ENCODE measurements at regions of chr3 and their contacts with region 1.

Region 1: GRCh38 chr3:49769926-49770325 is 16.4 kb downstream of the IP6K1 start:
- DNase-seq: no peak
- CTCF ChIP-seq: no peak

Region 2: GRCh38 chr3:49509028-49509561 is 260.8 kb before region 1 on chr3:
- CTCF ChIA-PET with region 1: no interaction called
- POLR2A ChIA-PET with region 1: no interaction called
- DNase-seq: no peak
- CTCF ChIP-seq: no peak

Region 3: GRCh38 chr3:50278868-50279224 is 508.9 kb after region 1 on chr3 and contains the start of gene LSMEM2:
- CTCF ChIA-PET with region 1: no interaction called
- POLR2A ChIA-PET with region 1: interaction called, 13 read pairs
- DNase-seq: no peak
- CTCF ChIP-seq: no peak

Measured in GM10248 (cell line).